ENCODE measurements at regions of chr3 and their contacts with region 1.

Region 1: DNA sequence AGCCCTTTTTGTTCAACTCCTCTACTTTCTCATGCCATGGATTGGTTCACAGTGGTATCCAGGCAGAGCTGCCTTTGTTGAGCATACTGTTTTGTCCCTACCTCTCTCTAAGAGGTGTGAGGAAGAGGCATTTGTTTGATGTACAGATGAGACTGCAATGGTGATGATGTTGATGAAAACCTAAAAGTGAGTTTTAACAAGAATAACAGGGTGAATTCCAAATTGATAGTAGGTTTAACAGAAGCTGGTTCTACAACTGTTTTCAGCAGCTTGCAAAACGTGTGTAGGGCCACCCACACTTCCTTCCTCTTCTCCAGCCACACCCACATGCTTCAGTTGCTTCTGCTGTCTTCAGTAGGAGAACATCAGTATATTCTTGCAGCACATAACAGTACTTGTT is 10.2 kb downstream of the SNRK start:
- DNase-seq: peak; percentile 32 to 90 (median 76)
- ATAC-seq: peak; percentile 87 to 92
- H3K4me3 Mint-ChIP-seq: peak overlapping the region; percentile 79 to 95 (median 88)
- H3K27ac Mint-ChIP-seq: peak overlapping the region; percentile 94 to 99 (median 97)
- H3K4me1 Mint-ChIP-seq: peaks cover 28 to 87% (median 67%) of the 10 kb centered on the region in 4 donors
- H3K27me3 Mint-ChIP-seq: no peaks in the 10 kb centered on the region

Region 2: GRCh38 chr3:43223670-43224364 is 72.7 kb before region 1 on chr3:
- POLR2A ChIA-PET with region 1: interaction called, 12 read pairs
- DNase-seq: peak in 3 of 10 donors; percentile 41 to 52 (median 42)
- ATAC-seq: peak in 1 of 2 donors; percentile 23
- H3K4me3 Mint-ChIP-seq: peak overlapping the region in 7 of 10 donors; percentile 15 to 82 (median 51)
- H3K27ac Mint-ChIP-seq: peak overlapping the region; percentile 36 to 95 (median 85)
- H3K4me1 Mint-ChIP-seq: peaks cover 34 to 69% (median 62%) of the 10 kb centered on the region in 4 donors
- H3K27me3 Mint-ChIP-seq: no peaks in the 10 kb centered on the region

Region 3: DNA sequence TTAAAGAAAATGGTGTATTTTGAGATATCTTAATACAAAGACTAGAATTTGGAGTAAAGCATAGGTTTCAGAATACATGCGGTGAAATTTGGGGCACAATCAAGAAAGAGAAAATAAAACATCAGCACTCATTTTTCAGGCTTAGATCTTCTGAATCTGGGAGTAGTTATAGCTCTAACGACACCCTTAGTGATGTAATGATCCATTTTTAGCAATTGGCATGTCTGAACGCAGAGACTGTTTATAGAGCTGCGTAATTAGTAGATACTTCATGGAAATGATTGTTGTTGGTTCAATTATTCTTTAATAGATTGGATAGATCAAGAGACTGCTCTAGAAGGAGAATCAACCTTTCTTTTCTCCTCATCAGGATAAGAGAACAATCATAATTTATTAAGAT is 57.8 kb before region 1 on chr3:
- POLR2A ChIA-PET with region 1: no interaction called
- DNase-seq: no peak
- ATAC-seq: no peak
- H3K4me3 Mint-ChIP-seq: no peak overlapping the region
- H3K27ac Mint-ChIP-seq: no peak overlapping the region
- H3K4me1 Mint-ChIP-seq: peaks cover 12 to 46% (median 32%) of the 10 kb centered on the region in 4 donors
- H3K27me3 Mint-ChIP-seq: no peaks in the 10 kb centered on the region

Region 4: GRCh38 chr3:43286115-43286840 is 10.3 kb before region 1 on chr3 and contains the start of gene SNRK:
- POLR2A ChIA-PET with region 1: interaction called, 100 read pairs
- DNase-seq: peak; percentile 81 to 98 (median 94)
- ATAC-seq: peak; percentile 69 to 81
- H3K4me3 Mint-ChIP-seq: peak within 1 kb of the TSS; percentile 94 to 100 (median 99)
- H3K27ac Mint-ChIP-seq: peak within 1 kb of the TSS; percentile 96 to 100 (median 100)
- H3K4me1 Mint-ChIP-seq: peaks cover 30 to 42% (median 35%) of the 10 kb centered on the region in 4 donors
- H3K27me3 Mint-ChIP-seq: peaks cover 0 to 2% (median 0%) of the 10 kb centered on the region in 5 donors
- polyA plus RNA-seq, gene SNRK: 71.1 to 97.5 (median 90.6) TPM

Region 5: DNA sequence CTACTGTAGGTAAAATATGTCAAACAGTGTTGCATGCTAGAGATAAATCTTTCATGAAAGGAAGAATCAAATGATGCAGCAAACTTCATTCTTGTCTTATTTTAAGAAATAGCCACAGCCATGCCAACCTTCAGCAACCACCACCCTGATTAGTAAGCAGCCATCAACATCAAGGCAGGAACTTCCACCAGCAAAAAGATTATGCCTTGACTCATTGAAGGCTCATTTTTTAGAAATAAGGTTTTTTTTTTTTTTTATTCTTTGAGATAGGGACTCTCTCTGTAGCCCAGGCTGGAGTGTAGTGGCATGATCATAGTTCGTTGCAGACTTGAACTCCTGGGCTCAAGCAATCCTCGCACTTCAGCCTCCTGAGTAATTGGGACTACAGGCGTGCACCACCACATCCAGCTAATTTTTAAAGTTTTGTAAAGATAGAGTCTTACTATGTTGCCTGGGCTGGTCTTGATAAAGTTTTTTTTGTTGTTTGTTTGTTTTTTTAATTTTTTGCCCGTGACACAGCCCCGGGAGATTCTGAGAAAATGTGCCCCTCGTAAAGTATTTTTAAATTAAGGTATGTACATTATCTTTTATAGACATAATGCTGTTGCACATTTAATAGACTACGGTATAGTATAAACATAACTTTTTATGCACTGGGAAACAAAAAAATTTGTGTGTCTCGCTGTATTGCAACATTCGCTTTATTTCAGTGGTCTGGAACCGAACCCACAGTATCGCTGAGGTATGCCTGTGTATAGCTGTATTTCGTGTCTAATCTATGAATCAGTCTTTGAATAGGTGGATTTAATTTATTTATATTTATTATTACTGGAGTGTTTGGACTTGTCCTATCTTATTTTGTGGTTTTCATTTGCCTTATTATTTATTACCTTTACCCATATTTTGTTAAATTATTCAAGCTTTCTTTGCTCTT is 13.1 kb after region 1 on chr3:
- POLR2A ChIA-PET with region 1: interaction called, 10 read pairs
- DNase-seq: no peak
- ATAC-seq: peak in 1 of 2 donors; percentile 23
- H3K4me3 Mint-ChIP-seq: peak overlapping the region; percentile 1 to 76 (median 53)
- H3K27ac Mint-ChIP-seq: peak overlapping the region; percentile 33 to 98 (median 88)
- H3K4me1 Mint-ChIP-seq: peaks cover 37 to 86% (median 73%) of the 10 kb centered on the region in 4 donors
- H3K27me3 Mint-ChIP-seq: no peaks in the 10 kb centered on the region

Region 6: DNA sequence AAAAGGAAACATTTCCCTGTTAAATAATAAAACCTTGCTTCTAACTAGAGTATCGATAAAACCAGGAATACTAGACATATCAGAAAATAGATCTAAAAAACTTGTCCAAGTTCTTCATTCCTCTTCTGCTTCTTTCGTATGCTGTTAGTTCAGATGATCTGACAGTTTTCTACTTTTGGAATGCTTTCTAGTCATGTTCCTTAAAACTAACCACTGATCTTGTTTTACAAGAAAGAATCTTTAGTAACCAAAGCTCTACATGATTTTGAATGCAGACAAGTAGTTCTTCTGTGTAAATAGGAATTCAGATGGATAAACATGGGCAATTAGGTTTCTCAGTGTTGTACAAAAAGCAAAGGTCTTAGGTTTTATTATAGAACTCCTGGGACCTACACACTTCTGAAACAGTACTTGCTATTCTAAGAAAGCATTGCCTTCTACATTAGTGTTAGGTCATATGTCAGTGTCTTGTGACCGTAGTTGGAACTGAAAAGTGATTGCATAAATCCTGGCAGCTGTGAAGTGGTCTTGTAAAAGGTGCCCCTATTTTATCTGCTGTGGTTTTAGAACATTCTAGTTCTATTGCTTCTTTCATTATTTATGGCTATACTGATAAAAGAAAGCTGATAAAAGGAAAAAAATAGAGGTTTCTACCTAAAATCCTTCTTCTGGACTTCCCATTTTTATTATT is 30.5 kb after region 1 on chr3:
- POLR2A ChIA-PET with region 1: interaction called, 60 read pairs
- DNase-seq: peak in 1 of 10 donors; percentile 36
- ATAC-seq: peak; percentile 57 to 75
- H3K4me3 Mint-ChIP-seq: peak overlapping the region; percentile 53 to 78 (median 67)
- H3K27ac Mint-ChIP-seq: peak overlapping the region; percentile 81 to 92 (median 88)
- H3K4me1 Mint-ChIP-seq: peaks cover 33 to 90% (median 80%) of the 10 kb centered on the region in 4 donors
- H3K27me3 Mint-ChIP-seq: no peaks in the 10 kb centered on the region

Region 7: DNA sequence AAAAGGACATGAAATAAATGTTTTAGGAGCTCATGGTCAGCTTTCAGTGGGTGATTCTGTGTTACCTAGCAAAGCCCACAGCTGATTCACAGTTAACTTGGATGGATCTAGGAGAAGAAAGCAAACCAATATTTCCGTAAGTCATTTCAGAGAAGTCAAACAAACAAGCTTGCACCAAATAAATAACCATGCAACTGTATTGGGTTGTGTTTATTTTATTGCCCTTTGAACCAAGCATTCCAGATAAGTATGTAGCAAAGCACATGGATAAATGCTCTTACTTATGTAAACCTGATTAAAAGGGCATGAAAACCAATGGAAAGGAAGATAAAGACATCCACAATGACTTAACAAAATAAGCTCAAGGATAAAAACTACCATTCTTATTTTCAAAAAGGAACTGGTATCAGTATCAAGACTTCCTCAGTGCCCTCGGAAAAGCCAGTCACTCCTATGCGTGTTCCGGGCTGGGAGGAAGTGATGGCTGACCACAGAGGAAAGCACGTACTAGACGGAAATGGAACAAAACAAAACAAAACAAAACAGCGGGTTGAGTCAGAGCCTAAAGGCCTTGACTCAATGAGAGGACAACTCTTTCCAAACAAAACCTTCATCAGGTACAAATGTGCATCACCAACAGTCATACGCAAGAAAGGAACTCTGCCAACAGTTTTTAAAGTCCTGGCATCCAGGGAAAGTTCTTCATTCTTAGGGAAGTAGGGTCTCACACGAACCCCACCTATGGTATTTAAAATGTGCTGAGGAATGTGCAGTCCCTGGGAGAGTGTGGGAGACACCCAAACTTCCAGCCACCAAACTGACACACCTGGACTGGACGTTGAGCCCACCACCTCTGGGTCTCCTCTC is 93.1 kb after region 1 on chr3:
- POLR2A ChIA-PET with region 1: interaction called, 15 read pairs
- DNase-seq: peak; percentile 33 to 88 (median 73)
- ATAC-seq: peak; percentile 88 to 97
- H3K4me3 Mint-ChIP-seq: peak overlapping the region; percentile 12 to 84 (median 72)
- H3K27ac Mint-ChIP-seq: peak overlapping the region; percentile 88 to 98 (median 94)
- H3K4me1 Mint-ChIP-seq: peaks cover 43 to 86% (median 67%) of the 10 kb centered on the region in 4 donors
- H3K27me3 Mint-ChIP-seq: no peaks in the 10 kb centered on the region